Activated CD8-positive, alpha-beta T cell treated with anti-CD3 and anti-CD28 coated beads, Interleukin-2, amount 10 ng/mL, durations not matched to agents 7 days and 5 days (primary cell): ENCODE measurements at regions of chr4 and their contacts with region 1.

Region 1: DNA sequence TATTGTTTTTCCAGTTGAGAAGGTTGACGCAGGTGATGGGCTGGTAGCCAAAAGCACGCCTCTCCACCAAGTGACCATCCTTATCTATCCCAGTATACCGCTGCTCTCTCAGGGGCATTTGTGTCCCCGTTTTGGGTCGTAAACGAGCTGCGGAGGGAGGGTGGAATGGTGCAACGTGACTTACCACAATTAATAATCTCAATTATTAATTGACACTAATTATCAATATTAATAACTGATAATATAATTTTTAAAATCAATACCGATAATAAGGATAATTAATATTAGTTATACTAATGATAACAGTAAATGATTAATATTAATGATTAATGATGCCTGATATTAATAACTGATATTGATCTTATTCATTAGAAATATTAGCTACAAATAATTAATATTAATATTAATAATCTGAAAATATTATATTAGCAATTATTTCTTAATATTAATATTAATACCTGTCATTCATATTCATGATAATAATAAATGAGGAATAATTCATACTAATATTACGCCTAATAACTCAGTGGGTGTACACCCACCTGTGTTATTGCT is 56.1 kb downstream of the OTOP1 start:
- DNase-seq: no peak
- ATAC-seq: no peak
- H3K4me3 Mint-ChIP-seq: no peak overlapping the region
- H3K27ac Mint-ChIP-seq: no peak overlapping the region
- H3K4me1 Mint-ChIP-seq: no peaks in the 10 kb centered on the region
- H3K27me3 Mint-ChIP-seq: peaks cover 1% of the 10 kb centered on the region

Region 2: DNA sequence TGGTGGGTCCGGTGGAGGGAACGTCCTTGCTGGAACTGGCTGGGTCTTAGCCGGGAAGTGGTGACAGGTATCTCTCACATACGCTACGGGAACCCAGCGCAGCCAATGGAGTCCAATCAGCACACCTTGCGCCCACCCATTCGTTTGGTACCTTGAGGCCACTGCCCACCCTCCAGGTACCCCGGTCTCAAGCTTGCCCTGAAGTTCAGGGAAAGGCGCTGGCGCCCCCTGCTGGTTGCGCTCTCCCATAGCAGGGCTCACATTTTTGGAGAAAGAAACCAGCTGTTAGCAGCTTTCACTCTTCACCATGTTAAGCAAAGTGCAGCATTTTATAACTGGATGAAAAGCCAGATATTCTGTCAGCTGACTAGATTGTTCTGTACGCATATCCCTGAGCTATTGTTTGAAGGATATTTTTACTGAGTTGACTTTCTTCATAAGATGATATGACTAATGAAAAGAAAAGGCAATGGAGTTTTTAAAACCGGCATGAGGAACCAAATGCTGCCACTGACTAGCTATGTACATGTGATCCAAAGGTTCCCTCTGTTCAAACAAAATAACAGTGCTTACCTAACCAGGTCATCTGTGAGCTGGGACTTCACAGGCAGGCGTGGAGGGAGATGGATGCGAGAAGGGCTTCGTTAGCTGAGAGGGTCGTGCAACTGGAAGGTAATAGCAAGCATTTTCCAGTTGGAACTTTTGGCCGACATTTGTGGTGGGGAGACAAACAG is 12.3 kb after region 1 on chr4:
- CTCF ChIA-PET with region 1: interaction called, 10 read pairs
- POLR2A ChIA-PET with region 1: no interaction called
- DNase-seq: peak; percentile 53
- ATAC-seq: no peak
- H3K4me3 Mint-ChIP-seq: no peak overlapping the region
- H3K27ac Mint-ChIP-seq: no peak overlapping the region
- H3K4me1 Mint-ChIP-seq: no peaks in the 10 kb centered on the region
- H3K27me3 Mint-ChIP-seq: peaks cover 15% of the 10 kb centered on the region

Region 3: GRCh38 chr4:4302416-4302815 is 131.7 kb after region 1 on chr4:
- CTCF ChIA-PET with region 1: no interaction called
- POLR2A ChIA-PET with region 1: no interaction called
- DNase-seq: no peak
- ATAC-seq: no peak
- H3K4me3 Mint-ChIP-seq: no peak overlapping the region
- H3K27ac Mint-ChIP-seq: no peak overlapping the region
- H3K4me1 Mint-ChIP-seq: peaks cover 5% of the 10 kb centered on the region
- H3K27me3 Mint-ChIP-seq: no peaks in the 10 kb centered on the region